AG04450 (cell line): ENCODE measurements at regions of chr1 and their contacts with region 1.

Region 1: GRCh38 chr1:158809862-158810261 is 21.3 kb upstream of the MNDA start:
- DNase-seq: no peak
- H3K4me3 ChIP-seq: no peak overlapping the region
- H3K27ac ChIP-seq: no peak overlapping the region
- H3K27me3 ChIP-seq: no peaks in the 10 kb centered on the region
- CTCF ChIP-seq: no peak

Region 2: DNA sequence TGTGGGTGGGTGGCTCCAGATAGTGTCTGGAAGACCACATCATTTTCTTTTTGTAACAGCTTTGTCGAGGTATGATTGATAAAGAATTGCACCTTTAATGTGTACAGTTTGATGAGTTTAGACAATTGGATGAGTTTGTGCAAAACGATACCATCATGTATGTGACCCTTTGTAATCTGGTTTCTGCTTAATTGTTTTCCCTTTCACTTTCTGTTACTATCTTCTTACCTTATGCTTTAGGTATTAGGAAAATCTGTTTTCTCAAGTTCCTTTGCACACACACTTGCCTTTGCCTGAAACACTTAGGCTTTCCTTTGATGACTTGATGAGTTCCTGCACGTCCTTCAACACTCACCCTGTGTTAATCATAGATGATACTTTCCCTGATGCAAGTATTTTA is 197.9 kb before region 1 on chr1:
- CTCF ChIA-PET with region 1: no interaction called
- POLR2A ChIA-PET with region 1: no interaction called
- DNase-seq: no peak
- H3K4me3 ChIP-seq: no peak overlapping the region
- H3K27ac ChIP-seq: no peak overlapping the region
- H3K27me3 ChIP-seq: no peaks in the 10 kb centered on the region
- CTCF ChIP-seq: no peak

Region 3: DNA sequence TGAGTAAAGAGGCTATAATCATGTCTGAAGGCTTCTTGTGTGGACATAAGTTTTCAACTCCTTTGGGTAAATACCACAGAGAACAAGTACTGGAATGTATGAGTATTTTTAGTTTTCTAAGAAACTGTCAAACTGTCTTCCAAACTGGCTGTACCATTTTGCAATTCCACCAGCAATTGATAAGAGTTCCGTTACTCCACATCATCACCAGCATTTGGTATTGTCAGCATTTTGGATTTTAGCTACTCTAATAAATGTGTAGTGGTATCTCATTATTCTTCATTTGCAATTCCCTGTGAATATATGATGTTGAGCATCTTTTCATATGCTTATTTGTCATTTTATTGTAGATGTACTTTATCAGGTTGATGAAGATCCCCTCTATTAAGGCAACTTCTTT is 11.9 kb after region 1 on chr1:
- CTCF ChIA-PET with region 1: interaction called, 10 read pairs
- POLR2A ChIA-PET with region 1: no interaction called
- DNase-seq: no peak
- H3K4me3 ChIP-seq: no peak overlapping the region
- H3K27ac ChIP-seq: no peak overlapping the region
- H3K27me3 ChIP-seq: no peaks in the 10 kb centered on the region
- CTCF ChIP-seq: no peak